Right cardiac atrium (tissue), 5 donors: ENCODE measurements at regions of chr14 and their contacts with region 1.

Region 1: GRCh38 chr14:45526715-45527549 is 273.9 kb upstream of the MIS18BP1 start:
- DNase-seq: peak in 1 of 3 donors; percentile 33
- ATAC-seq: peak; percentile 53 to 77
- H3K4me3 ChIP-seq: no peak overlapping the region
- H3K27ac ChIP-seq: no peak overlapping the region
- H3K4me1 ChIP-seq: no peaks in the 10 kb centered on the region
- H3K27me3 ChIP-seq: no peaks in the 10 kb centered on the region

Region 2: GRCh38 chr14:45426670-45427282 is 100.2 kb before region 1 on chr14:
- intact Hi-C with region 1: loop called (anchors 2 to 5 kb)
- DNase-seq: no peak
- ATAC-seq: peak in 1 of 2 donors; percentile 43
- H3K4me3 ChIP-seq: no peak overlapping the region
- H3K27ac ChIP-seq: no peak overlapping the region
- H3K4me1 ChIP-seq: no peaks in the 10 kb centered on the region
- H3K27me3 ChIP-seq: no peaks in the 10 kb centered on the region